MCF 10A (cell line): ENCODE measurements at regions of chr17 and their contacts with region 1.

Region 1: GRCh38 chr17:50872710-50873424 is 6.7 kb upstream of the TOB1 start:
- DNase-seq: peak; percentile 76
- H3K4me3 Mint-ChIP-seq: no peak overlapping the region
- H3K27ac Mint-ChIP-seq: peak overlapping the region; percentile 35
- H3K4me1 Mint-ChIP-seq: peaks cover 5% of the 10 kb centered on the region
- H3K27me3 Mint-ChIP-seq: no peaks in the 10 kb centered on the region
- CTCF ChIP-seq: no peak

Region 2: DNA sequence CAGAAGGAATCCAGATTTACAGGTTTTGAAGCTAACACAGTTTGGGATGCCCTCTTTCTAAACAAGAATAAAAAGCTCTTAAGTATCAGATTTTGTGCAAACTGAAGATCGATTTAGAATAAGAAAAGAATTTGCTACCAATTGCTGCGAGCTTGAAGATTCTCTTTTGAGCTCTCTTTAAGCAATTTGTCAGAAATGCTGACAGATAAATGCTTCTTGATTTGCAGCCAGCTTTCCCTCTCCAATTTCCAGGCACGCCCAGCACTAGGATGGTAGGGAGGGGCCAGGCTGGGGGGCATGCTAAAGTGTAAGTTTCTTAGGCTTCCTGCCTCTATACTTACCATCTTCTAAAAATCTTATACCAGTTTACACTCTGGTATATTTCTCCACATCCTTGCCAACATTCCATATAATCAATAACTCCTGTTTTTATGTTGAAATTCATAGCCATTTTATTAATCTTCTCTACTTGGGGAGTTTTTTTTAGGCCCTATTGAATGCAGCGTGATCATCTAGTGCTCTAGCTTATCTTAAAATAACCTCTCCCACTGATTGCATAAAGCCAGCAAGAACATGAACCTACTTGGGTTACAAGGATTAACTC is 429.4 kb before region 1 on chr17:
- CTCF ChIA-PET with region 1: no interaction called
- POLR2A ChIA-PET with region 1: no interaction called
- intact Hi-C with region 1: no loop called
- DNase-seq: no peak
- H3K4me3 Mint-ChIP-seq: peak overlapping the region; percentile 10
- H3K27ac Mint-ChIP-seq: no peak overlapping the region
- H3K4me1 Mint-ChIP-seq: peaks cover 18% of the 10 kb centered on the region
- H3K27me3 Mint-ChIP-seq: no peaks in the 10 kb centered on the region
- CTCF ChIP-seq: no peak

Region 3: DNA sequence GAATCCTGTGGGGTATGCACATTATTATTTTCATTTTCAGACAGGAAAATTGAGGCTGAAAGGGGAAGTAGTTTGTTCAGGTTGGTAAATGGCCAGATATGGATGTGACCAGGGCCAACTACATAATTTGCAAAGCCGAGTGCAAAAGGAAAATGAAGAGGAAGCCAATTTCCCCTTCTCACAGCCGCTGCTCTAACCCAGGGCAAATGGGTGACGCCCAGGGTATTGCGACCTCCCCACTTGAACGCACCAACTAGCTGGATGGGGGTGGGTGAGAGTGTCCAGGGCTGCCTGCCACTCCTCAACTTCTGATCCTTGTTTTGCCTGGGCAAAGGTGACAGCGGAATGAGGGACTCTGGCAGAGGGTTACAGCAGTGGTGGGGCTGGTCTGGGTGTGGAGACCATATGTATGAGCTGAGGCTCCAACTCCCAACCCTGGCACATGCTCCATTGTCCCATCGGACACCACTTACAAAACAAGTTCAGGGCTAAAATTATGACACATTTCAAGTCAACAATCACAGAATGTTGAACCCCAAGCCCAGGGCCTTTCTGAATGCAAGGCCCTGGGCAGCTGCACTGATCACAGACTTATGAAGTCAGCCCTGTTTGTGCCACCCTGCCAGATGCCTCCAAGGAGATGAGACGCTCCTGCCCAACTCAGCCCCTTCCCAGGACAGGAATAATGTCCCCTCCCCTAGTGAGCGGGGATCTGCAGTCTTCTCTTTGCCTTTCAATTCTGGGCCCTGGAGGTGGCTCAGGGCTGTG is 107.2 kb before region 1 on chr17:
- CTCF ChIA-PET with region 1: no interaction called
- POLR2A ChIA-PET with region 1: no interaction called
- intact Hi-C with region 1: no loop called
- DNase-seq: no peak
- H3K4me3 Mint-ChIP-seq: no peak overlapping the region
- H3K27ac Mint-ChIP-seq: no peak overlapping the region
- H3K4me1 Mint-ChIP-seq: peaks cover 12% of the 10 kb centered on the region
- H3K27me3 Mint-ChIP-seq: no peaks in the 10 kb centered on the region
- CTCF ChIP-seq: no peak

Region 4: DNA sequence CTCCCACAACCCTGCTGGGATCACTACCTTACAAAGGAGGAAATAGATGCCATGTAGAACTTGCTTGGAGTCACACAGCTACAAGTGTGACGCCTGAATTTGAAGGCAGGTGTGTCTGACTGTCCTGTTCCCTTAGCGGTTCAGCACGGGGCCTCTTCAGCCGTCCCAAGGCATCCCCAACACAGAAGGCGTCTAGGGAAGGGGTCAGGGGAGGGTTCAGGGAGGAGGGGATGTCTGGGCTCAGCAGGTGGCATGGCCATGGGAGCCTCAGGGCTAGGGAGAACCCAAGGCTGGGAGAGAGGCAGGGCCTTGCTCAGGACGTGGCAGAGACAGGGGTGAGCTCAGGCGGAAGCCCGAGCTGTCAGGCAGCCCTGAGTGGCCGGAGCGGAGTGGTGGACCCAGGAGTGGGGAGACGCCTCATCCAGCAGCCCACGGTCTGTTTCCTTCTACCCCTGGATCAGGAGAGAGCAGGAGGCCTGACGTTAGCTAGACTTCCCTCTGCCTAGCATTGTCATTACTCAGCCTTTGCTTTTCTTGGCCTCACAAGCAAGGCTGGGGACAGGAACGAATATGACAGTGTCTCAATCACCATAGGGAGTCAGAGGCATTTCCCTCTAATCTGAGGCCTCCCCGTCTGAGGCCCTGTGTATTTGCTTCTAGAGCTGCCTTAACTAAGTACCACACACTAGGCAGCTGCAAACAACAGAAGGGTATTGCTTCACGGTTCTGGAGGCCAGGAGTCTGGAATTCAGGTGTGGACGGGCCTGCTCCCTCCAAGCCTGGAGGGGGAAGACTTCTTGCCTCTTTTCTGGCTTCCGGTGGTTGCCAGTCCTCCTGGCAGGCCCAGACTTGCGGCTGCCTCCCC is 74.2 kb before region 1 on chr17:
- CTCF ChIA-PET with region 1: no interaction called
- POLR2A ChIA-PET with region 1: no interaction called
- intact Hi-C with region 1: no loop called
- DNase-seq: peak; percentile 86
- H3K4me3 Mint-ChIP-seq: no peak overlapping the region
- H3K27ac Mint-ChIP-seq: peak overlapping the region; percentile 82
- H3K4me1 Mint-ChIP-seq: peaks cover 11% of the 10 kb centered on the region
- H3K27me3 Mint-ChIP-seq: no peaks in the 10 kb centered on the region
- CTCF ChIP-seq: no peak

Region 5: GRCh38 chr17:50883850-50884438 is 11.1 kb after region 1 on chr17:
- CTCF ChIA-PET with region 1: interaction called, 5 read pairs
- POLR2A ChIA-PET with region 1: interaction called, 129 read pairs
- intact Hi-C with region 1: no loop called
- DNase-seq: no peak
- H3K4me3 Mint-ChIP-seq: no peak overlapping the region
- H3K27ac Mint-ChIP-seq: peak overlapping the region; percentile 90
- H3K4me1 Mint-ChIP-seq: peaks cover 22% of the 10 kb centered on the region
- H3K27me3 Mint-ChIP-seq: no peaks in the 10 kb centered on the region
- CTCF ChIP-seq: no peak

Region 6: DNA sequence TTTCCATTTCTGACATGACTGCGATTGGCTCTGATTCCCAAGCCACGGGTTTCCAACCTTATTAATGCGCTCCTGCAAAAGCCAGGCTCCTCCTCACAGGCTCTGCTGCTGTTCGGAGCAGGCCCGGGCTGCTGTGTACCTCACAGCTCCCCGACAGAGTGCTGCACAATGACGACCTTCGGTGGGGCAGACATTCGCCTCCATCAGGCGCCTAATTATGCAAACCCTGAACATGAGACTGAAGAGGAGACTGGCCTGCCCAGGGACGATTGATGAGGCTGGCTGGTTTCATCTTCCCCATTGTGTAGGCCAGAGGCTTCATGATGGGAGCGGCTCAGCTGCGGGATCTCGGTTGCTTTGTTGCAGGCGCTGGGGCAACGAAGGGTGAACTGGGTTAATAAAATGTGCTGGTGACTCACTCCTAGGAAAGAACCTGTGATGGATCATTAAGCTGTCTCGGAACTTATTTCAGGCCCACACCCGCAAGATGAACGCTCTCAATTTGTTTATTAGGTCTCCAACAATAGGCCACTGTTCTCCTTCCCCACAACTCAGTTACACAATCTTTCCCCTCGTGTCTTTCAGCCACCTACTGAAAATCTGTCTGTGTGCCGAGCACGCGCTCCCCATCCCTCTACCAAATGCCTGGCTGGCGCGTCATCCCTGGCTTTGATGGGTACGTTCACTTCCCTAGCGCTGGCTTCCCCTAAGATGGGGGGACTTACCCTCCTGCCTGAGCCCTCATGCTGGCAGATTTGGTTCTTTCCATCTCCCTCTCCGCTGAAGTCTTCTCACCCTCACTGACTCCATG is 20.5 kb after region 1 on chr17:
- CTCF ChIA-PET with region 1: interaction called, 5 read pairs
- POLR2A ChIA-PET with region 1: interaction called, 139 read pairs
- intact Hi-C with region 1: no loop called
- DNase-seq: peak; percentile 35
- H3K4me3 Mint-ChIP-seq: peak overlapping the region; percentile 6
- H3K27ac Mint-ChIP-seq: peak overlapping the region; percentile 84
- H3K4me1 Mint-ChIP-seq: peaks cover 29% of the 10 kb centered on the region
- H3K27me3 Mint-ChIP-seq: no peaks in the 10 kb centered on the region
- CTCF ChIP-seq: no peak